GM23248 (cell line): ENCODE measurements at regions of chr2 and their contacts with region 1.

Region 1: GRCh38 chr2:43611987-43612894 is 16.4 kb upstream of the THADA start:
- DNase-seq: peak; percentile 78
- H3K4me3 ChIP-seq: no peak overlapping the region
- H3K27ac ChIP-seq: no peak overlapping the region
- H3K4me1 ChIP-seq: no peaks in the 10 kb centered on the region
- H3K27me3 ChIP-seq: no peaks in the 10 kb centered on the region

Region 2: DNA sequence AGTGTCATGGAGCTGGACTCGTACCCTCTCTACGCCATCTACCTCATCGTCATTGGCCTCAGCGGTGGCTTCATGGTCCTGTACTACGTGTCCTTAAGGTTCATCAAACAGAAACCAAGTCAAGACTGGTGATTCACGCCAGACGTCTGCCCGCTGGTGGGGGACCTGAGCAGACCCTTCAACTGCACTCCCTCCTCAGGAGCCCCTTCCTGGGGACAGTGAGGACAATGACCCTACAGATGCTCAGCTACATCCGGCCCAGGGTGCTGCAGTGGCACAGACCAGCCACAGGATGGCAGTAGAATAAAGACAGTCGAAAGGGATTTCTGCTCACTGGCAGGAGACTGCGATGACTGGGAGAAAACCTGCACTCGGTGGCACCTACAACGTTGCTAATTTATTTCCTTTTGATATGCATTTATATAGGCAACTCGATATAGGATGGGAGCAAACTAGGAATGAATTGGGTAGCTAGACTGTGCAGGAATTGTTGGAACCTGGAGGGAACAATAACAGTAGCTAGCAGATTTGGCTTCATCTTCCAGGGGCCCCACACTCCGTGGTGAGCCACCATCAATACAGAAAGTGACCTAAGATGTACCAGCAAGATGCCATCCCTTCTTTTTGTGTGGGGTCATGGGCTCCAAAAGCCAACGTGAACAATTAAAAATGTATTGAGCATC is 265.7 kb after region 1 on chr2:
- in situ Hi-C with region 1: loop called (anchors 10 kb)
- DNase-seq: peak; percentile 75
- H3K4me3 ChIP-seq: no peak overlapping the region
- H3K27ac ChIP-seq: no peak overlapping the region
- H3K4me1 ChIP-seq: no peaks in the 10 kb centered on the region
- H3K27me3 ChIP-seq: 0 out of 2 replicates have a peak, but pooled peaks cover 7% of the 10 kb centered on the region